SK-N-SH (cell line): ENCODE measurements at regions of chr7 and their contacts with region 1.

Region 1: GRCh38 chr7:13990984-13991790 is 1.7 kb upstream of the ETV1 start:
- DNase-seq: peak; percentile 92
- H3K4me3 ChIP-seq: peak overlapping the region; percentile 91 to 100
- H3K27ac ChIP-seq: peak overlapping the region; percentile 91 to 96
- H3K4me1 ChIP-seq: peaks cover 3 to 22% of the 10 kb centered on the region in 2 experiments; a peak in 2 of 4 replicates
- H3K27me3 ChIP-seq: no peaks in the 10 kb centered on the region
- CTCF ChIP-seq: no peak
- EP300 ChIP-seq: peak in 1 of 2 experiments; percentile 36; a peak in 1 of 4 replicates
- RAD21 ChIP-seq: no peak

Region 2: DNA sequence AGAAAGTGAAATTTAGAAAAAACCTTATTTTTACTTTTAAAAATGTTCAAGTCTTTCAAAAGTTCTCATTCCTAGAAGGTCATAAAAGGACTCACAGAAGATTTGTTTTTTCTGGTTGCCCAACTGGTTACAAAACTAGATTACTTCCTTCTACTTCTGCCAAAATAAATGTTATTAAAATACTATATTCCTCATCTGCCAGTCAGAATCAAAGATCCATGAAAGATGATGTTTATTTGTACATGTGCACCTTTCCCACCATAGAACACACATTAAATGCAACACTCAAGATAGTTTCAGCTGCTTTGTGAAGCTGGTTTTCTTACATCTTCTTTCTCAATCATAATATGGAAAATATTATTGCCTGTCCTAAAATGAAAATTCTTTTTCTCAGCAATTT is 467.1 kb before region 1 on chr7:
- CTCF ChIA-PET with region 1: interaction called, 14 read pairs
- POLR2A ChIA-PET with region 1: no interaction called
- DNase-seq: no peak
- H3K4me3 ChIP-seq: no peak overlapping the region
- H3K27ac ChIP-seq: no peak overlapping the region
- H3K4me1 ChIP-seq: peaks cover 0 to 2% of the 10 kb centered on the region in 2 experiments; a peak in 1 of 4 replicates
- H3K27me3 ChIP-seq: no peaks in the 10 kb centered on the region
- CTCF ChIP-seq: no peak
- EP300 ChIP-seq: no peak
- RAD21 ChIP-seq: no peak

Region 3: DNA sequence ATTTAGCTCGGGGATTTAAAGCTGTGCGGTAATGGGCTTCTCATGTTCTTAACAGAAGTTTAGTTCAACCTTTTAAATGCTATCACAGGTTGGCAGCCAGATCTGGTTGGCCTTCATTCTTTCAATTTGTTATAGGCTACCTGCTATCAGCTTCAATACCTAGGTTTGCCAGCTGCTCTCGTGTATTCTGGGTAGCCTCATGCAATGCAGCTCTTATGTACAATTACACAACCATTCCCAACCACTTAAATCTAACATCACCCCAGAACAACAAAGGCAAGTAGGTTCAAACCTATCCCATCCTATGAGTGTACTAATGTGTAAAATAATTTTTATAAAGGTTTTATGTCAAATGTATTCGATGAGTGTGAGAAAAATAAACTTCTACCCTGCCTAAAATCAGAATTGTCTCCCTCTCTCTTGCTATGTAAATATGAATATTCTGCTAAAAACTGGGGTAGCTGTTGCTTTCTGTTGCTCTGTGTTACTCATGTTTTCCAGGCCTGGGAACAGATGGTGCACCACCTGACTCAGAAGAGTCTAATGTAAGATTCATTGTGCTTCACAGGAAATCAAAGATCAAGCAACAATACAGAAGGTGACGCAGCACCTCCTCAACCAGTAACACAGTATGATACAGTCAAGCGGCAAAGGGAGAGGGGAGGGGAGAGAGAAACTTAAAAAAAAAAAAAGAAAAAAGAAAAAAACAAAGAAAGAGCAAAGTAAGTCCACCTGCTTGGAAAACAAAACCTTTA is 190.3 kb before region 1 on chr7:
- CTCF ChIA-PET with region 1: no interaction called
- POLR2A ChIA-PET with region 1: no interaction called
- DNase-seq: no peak
- H3K4me3 ChIP-seq: no peak overlapping the region
- H3K27ac ChIP-seq: peak overlapping the region in 1 of 2 experiments; percentile 72; a peak in 2 of 4 replicates
- H3K4me1 ChIP-seq: no peaks in the 10 kb centered on the region
- H3K27me3 ChIP-seq: no peaks in the 10 kb centered on the region
- CTCF ChIP-seq: no peak
- EP300 ChIP-seq: peak in 1 of 2 experiments; percentile 58; a peak in 1 of 4 replicates
- RAD21 ChIP-seq: no peak

Region 4: DNA sequence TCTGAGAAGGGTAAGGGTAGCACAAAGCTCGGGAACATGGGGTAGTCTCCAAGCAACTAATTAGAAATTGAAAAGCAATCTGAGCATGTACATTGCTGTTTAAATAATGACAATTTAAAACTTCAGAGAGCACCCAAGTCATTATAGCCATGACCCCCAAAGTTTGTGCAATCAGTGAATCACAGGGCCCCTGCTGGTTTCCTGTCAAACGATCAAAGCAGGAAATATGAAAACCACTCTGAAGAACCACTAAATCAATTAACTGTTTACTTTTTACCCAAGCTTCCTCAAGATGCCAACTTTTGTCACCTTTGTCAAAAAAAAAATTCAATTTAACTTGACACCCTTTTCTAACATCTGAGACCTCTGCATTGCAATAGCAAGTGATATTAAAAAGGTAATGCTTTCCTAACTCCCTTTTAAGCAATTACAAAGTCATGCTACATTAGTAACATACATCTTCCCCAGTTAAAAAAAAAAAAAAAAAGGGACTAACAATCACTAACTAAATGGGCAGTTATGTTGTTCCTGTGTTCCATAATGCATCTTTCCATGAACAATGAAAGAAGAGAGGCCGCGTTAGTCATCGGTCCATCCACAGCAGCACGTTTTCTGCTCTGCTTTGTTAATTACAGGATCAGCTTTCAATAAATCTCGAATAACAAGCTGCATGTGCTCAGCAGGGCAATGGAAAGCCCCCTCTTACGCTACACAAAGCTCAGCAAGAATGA is 82.4 kb before region 1 on chr7:
- CTCF ChIA-PET with region 1: interaction called, 12 read pairs
- POLR2A ChIA-PET with region 1: no interaction called
- DNase-seq: no peak
- H3K4me3 ChIP-seq: no peak overlapping the region
- H3K27ac ChIP-seq: no peak overlapping the region
- H3K4me1 ChIP-seq: peaks cover 3 to 15% of the 10 kb centered on the region in 2 experiments; a peak in 3 of 4 replicates
- H3K27me3 ChIP-seq: no peaks in the 10 kb centered on the region
- CTCF ChIP-seq: no peak
- EP300 ChIP-seq: no peak
- RAD21 ChIP-seq: no peak

Region 5: GRCh38 chr7:13945670-13946069 is 45.5 kb before region 1 on chr7:
- CTCF ChIA-PET with region 1: interaction called, 13 read pairs
- POLR2A ChIA-PET with region 1: no interaction called
- DNase-seq: peak; percentile 72
- H3K4me3 ChIP-seq: peak overlapping the region; percentile 23 to 44; a peak in 3 of 4 replicates
- H3K27ac ChIP-seq: peak overlapping the region; percentile 30 to 75; a peak in 3 of 4 replicates
- H3K4me1 ChIP-seq: peaks cover 11 to 38% of the 10 kb centered on the region in 2 experiments; a peak in 3 of 4 replicates
- H3K27me3 ChIP-seq: no peaks in the 10 kb centered on the region
- CTCF ChIP-seq: no peak
- EP300 ChIP-seq: peak in 1 of 2 experiments; percentile 96; a peak in 2 of 4 replicates
- RAD21 ChIP-seq: peak; percentile 46

Region 6: GRCh38 chr7:13953368-13953767 is 37.8 kb before region 1 on chr7:
- CTCF ChIA-PET with region 1: interaction called, 11 read pairs
- POLR2A ChIA-PET with region 1: no interaction called
- DNase-seq: no peak
- H3K4me3 ChIP-seq: no peak overlapping the region
- H3K27ac ChIP-seq: no peak overlapping the region
- H3K4me1 ChIP-seq: peaks cover 0 to 14% of the 10 kb centered on the region in 2 experiments; a peak in 2 of 4 replicates
- H3K27me3 ChIP-seq: no peaks in the 10 kb centered on the region
- CTCF ChIP-seq: no peak
- EP300 ChIP-seq: no peak
- RAD21 ChIP-seq: no peak

Region 7: DNA sequence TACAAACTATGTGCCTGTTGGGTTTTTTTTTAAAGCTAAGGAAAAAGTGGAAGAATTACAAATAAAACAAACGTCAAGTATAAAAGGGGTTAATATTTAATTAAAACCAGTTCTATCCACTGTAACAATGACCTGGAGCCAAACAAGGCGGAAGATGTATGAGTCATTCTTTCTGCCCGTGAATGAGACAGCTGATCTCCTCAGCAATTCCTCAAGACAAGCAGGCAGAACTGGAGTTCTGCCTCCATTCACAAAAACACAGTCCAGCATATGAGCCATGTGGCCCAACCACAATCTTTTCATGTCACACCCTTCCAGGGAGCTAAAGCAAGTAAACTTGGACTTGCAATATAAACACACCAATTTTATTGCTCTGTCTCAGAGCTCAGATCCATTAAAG is 10.1 kb before region 1 on chr7:
- CTCF ChIA-PET with region 1: interaction called, 20 read pairs
- POLR2A ChIA-PET with region 1: interaction called, 4 read pairs
- DNase-seq: peak; percentile 44
- H3K4me3 ChIP-seq: no peak overlapping the region; a peak in 1 of 4 replicates
- H3K27ac ChIP-seq: peak overlapping the region; percentile 72 to 81; a peak in 3 of 4 replicates
- H3K4me1 ChIP-seq: peaks cover 27 to 37% of the 10 kb centered on the region in 2 experiments; a peak in 3 of 4 replicates
- H3K27me3 ChIP-seq: no peaks in the 10 kb centered on the region
- CTCF ChIP-seq: no peak
- EP300 ChIP-seq: peak; percentile 84 to 90
- RAD21 ChIP-seq: peak; percentile 14; the same call in 1 of the 2 replicates

Region 8: DNA sequence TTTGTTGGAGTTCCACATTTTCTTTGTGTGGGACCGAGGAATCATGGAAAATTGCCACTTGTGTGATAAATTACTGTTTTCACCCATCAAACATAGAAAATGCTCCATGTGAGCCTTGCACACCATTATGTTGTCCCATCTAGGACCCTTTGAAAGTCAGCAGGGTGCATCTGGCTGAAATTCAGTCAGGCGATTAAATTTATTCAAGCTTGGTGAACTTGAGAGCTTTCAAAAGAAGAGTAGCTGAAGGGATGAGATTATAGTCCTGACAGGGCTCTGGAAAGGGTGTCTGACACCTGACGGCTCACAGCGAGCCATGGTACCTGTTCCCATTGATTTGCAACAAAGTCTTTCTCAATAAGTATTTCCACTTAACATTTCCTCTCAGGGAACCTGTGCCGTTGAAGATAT is 398.0 kb after region 1 on chr7:
- CTCF ChIA-PET with region 1: no interaction called
- POLR2A ChIA-PET with region 1: no interaction called
- DNase-seq: no peak
- H3K4me3 ChIP-seq: no peak overlapping the region
- H3K27ac ChIP-seq: no peak overlapping the region
- H3K4me1 ChIP-seq: no peaks in the 10 kb centered on the region
- H3K27me3 ChIP-seq: no peaks in the 10 kb centered on the region
- CTCF ChIP-seq: no peak
- EP300 ChIP-seq: no peak
- RAD21 ChIP-seq: no peak

Region 9: GRCh38 chr7:14457568-14458453 is 466.6 kb after region 1 on chr7:
- CTCF ChIA-PET with region 1: interaction called, 19 read pairs
- POLR2A ChIA-PET with region 1: interaction called, 3 read pairs
- DNase-seq: peak; percentile 53
- H3K4me3 ChIP-seq: peak overlapping the region; percentile 6 to 9; a peak in 1 of 4 replicates
- H3K27ac ChIP-seq: no peak overlapping the region; a peak in 1 of 4 replicates
- H3K4me1 ChIP-seq: no peaks in the 10 kb centered on the region; a peak in 1 of 4 replicates
- H3K27me3 ChIP-seq: no peaks in the 10 kb centered on the region
- CTCF ChIP-seq: peak; percentile 98
- EP300 ChIP-seq: no peak
- RAD21 ChIP-seq: peak; percentile 98